Naive thymus-derived CD8-positive, alpha-beta T cell (primary cell): ENCODE measurements at regions of chr3 and their contacts with region 1.

Region 1: GRCh38 chr3:128322066-128323022 is 144.3 kb downstream of the DNAJB8 start:
- DNase-seq: peak; percentile 49 to 85 (median 62)
- ATAC-seq: peak; percentile 79 to 81
- H3K4me3 Mint-ChIP-seq: no peak overlapping the region
- H3K27ac Mint-ChIP-seq: peak overlapping the region; percentile 43 to 98 (median 85)
- H3K4me1 Mint-ChIP-seq: peaks cover 29 to 74% (median 61%) of the 10 kb centered on the region in 4 donors
- H3K27me3 Mint-ChIP-seq: no peaks in the 10 kb centered on the region

Region 2: DNA sequence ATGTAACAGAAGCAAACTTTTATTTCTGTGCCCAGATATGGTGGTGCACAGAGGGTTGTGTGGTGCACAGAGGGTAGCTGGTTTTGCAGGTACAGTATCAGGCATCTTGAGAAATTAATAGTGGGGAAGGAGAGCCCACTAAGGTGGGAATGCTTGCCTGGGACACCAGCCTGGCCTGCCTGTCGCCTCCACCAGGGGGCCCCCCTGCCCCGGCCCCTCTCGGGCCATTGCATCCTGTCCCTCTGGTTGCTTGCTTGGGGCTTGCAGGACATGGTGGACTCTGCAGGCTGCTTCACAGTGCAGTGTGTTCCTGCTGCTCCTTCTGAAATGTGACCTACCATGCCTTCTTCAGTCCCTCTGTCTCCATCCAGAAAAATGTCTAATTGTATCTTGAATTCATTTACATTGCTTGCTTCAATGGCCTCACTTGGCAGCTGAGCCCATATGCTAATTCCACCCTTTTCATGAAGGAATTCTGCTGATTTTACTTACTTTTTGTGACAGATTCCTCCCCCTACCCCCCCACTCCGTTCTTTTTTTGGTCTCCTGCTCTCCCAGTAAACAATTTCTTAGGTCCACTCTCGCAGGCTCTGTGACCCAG is 95.4 kb before region 1 on chr3:
- POLR2A ChIA-PET with region 1: interaction called, 10 read pairs
- DNase-seq: peak in 7 of 10 donors; percentile 8 to 37 (median 27)
- ATAC-seq: peak in 1 of 2 donors; percentile 76
- H3K4me3 Mint-ChIP-seq: no peak overlapping the region
- H3K27ac Mint-ChIP-seq: peak overlapping the region in 6 of 10 donors; percentile 14 to 77 (median 58)
- H3K4me1 Mint-ChIP-seq: peaks cover 17 to 34% (median 23%) of the 10 kb centered on the region in 4 donors
- H3K27me3 Mint-ChIP-seq: no peaks in the 10 kb centered on the region

Region 3: DNA sequence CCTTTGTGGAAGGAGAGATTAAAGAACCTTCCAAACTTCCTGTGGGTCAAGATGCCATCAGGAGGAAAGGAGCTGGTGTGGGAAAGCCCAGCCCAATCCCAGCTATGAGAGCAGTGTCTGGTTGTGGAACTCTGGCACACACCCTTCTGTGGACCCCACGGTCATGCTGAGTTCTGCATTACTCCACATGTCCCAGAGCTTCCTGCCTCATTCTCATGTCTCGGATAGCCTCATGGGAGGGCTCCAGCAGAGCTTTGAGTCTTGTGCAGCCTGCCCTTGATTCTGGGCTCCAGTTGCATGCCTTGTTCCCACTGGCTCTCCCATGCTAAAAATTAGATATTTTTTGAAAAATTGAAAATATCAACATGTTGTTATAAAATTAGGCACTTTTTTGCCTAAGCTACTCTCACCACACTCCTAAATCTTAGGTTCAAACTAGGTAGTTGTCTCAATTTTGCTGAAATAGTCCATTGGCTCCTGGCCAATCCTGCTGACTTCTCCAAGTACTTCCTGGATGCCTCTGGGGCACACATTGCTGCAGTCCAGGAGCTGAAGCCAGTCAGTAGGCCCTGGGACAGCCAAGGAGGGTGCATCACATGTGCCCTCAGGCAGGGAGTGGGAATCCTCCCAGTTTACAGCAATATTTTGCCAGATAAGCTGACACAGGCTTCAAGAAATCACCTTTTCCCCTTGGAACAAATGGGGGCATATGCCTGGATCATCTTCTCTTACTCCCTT is 24.8 kb before region 1 on chr3:
- POLR2A ChIA-PET with region 1: interaction called, 87 read pairs
- DNase-seq: no peak
- ATAC-seq: no peak
- H3K4me3 Mint-ChIP-seq: peak overlapping the region in 3 of 10 donors; percentile 11 to 50 (median 46)
- H3K27ac Mint-ChIP-seq: peak overlapping the region in 9 of 10 donors; percentile 40 to 97 (median 75)
- H3K4me1 Mint-ChIP-seq: peaks cover 26 to 82% (median 61%) of the 10 kb centered on the region in 4 donors
- H3K27me3 Mint-ChIP-seq: no peaks in the 10 kb centered on the region

Region 4: DNA sequence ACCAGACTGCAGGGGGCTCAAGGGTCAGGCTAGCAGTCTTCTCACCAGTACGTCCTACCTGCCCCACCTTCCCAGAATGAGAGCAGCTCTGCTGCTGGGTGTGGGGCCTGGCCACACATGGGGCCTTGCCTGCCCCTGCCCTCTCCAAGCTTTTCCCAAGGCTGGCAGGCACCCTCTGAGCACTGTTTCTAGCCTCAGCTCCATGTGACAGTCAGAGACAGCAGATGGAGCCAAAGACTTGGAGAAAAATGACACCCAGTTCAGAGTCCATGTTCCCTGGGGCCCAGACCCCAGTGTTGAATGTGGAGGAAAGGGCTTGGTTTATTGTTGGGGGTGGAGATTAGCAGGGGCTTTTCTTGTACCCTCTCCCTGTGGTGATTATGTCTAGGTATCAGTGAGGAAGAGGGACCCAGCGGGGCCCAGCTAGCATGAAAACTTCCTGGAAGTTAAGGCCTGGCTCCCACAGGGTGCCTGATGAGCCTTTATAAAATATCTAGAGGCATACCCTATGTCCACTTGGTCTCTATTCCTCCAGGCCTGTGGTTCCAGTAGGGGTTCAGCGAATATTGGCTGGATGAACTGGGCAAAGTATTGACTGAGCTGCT is 15.2 kb before region 1 on chr3:
- POLR2A ChIA-PET with region 1: interaction called, 26 read pairs
- DNase-seq: peak in 1 of 10 donors; percentile 29
- ATAC-seq: peak; percentile 57 to 75
- H3K4me3 Mint-ChIP-seq: no peak overlapping the region
- H3K27ac Mint-ChIP-seq: peak overlapping the region in 6 of 10 donors; percentile 38 to 69 (median 58)
- H3K4me1 Mint-ChIP-seq: peaks cover 8 to 35% (median 24%) of the 10 kb centered on the region in 4 donors
- H3K27me3 Mint-ChIP-seq: no peaks in the 10 kb centered on the region

Region 5: GRCh38 chr3:128343287-128344051 is 21.1 kb after region 1 on chr3:
- POLR2A ChIA-PET with region 1: no interaction called
- DNase-seq: no peak
- ATAC-seq: no peak
- H3K4me3 Mint-ChIP-seq: no peak overlapping the region
- H3K27ac Mint-ChIP-seq: peak overlapping the region in 2 of 10 donors; percentile 73 to 80
- H3K4me1 Mint-ChIP-seq: peaks cover under 1 to 18% (median 6%) of the 10 kb centered on the region in 4 donors
- H3K27me3 Mint-ChIP-seq: no peaks in the 10 kb centered on the region